Sciatic nerve (tissue), 2 donors: ENCODE measurements at regions of chr11 and their contacts with region 1.

Region 1: DNA sequence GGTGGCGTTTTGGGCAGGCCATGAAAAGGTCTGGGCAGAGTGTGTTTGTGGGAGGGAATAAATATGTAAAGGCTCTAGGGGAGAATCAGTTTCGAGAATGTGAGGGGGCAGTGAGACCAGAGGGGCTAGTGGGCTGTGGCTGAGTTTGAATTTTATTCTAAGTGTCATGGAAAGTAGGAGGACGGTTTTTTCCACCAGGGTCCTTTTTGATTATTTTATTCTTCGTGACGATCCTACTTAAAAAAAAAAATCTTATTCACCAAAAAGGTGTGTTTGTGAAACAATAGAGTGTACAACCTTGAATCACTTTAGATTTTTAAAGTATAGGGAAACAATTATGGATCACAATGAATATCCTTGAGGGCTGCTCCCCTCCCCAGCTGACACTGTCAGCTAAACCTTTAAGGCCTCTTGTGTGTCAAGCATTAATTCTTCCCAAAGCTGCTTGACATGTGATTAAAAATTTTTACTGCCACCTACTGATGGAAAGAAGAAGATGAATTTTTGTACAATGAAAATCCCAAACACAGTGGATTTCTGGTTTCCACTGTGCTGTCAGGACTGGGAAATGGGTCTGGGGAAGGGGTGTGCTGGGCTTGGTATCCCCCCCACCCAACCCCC is 107.5 kb upstream of the OR4B1 start:
- DNase-seq: no peak
- ATAC-seq: peak; percentile 64

Region 2: GRCh38 chr11:47932544-47932943 is 176.6 kb before region 1 on chr11:
- intact Hi-C with region 1: loop called (anchors 10 kb)
- DNase-seq: no peak
- ATAC-seq: no peak

Region 3: DNA sequence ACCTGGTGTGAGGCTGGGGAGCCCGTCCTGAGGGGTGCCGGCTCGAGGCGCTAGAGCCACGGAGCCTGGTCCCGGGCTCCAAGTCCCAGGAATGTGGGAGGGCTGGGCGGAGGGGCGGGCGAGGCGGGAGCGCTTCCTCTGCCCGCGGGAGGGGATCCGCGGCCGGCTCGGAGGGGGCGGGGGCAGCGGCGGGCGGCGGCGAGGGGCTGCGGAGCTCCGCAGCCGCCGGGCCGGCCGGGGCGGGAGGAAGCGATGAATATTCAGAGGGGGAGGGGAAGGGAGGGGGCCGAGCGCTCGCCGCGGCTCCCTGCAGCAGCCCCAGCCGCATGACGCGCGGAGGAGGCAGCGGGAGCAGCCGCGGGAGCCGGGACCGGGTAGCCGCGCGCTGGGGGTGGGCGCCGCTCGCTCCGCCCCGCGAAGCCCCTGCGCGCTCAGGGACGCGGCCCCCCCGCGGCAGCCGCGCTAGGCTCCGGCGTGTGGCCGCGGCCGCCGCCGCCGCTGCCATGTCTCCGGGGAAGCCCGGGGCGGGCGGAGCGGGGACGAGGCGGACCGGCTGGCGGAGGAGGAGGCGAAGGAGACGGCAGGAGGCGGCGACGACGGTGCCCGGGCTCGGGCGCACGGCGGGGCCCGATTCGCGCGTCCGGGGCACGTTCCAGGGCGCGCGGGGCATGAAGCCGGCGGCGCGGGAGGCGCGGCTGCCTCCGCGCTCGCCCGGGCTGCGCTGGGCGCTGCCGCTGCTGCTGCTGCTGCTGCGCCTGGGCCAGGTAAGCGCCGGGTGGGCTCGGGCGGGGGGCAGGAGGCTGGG is 128.7 kb before region 1 on chr11 and contains the start of gene PTPRJ:
- intact Hi-C with region 1: loop called (anchors 10 kb)
- DNase-seq: peak; percentile 82
- ATAC-seq: peak; percentile 81
- total RNA-seq, gene PTPRJ: 35.1 TPM